Colonic mucosa (tissue), 4 donors: ENCODE measurements at regions of chr15 and their contacts with region 1.

Region 1: GRCh38 chr15:40421246-40422157 is 15.9 kb downstream of the IVD start:
- DNase-seq: peak; percentile 89
- H3K4me3 ChIP-seq: no peak overlapping the region
- H3K27ac ChIP-seq: peak overlapping the region; percentile 50
- H3K4me1 ChIP-seq: peaks cover 4% of the 10 kb centered on the region
- H3K27me3 ChIP-seq: no peaks in the 10 kb centered on the region
- CTCF ChIP-seq: peak; percentile 88

Region 2: GRCh38 chr15:40323239-40323952 is 98.1 kb before region 1 on chr15 and contains the start of gene INAFM2:
- intact Hi-C with region 1: loop called (anchors 5 kb)
- DNase-seq: peak; percentile 87
- H3K4me3 ChIP-seq: peak within 1 kb of the TSS; percentile 81
- H3K27ac ChIP-seq: peak within 1 kb of the TSS; percentile 63
- H3K4me1 ChIP-seq: peaks cover 5% of the 10 kb centered on the region
- H3K27me3 ChIP-seq: no peaks in the 10 kb centered on the region
- CTCF ChIP-seq: peak; percentile 55
- total RNA-seq, gene INAFM2: 10.8 to 28.6 TPM

Region 3: DNA sequence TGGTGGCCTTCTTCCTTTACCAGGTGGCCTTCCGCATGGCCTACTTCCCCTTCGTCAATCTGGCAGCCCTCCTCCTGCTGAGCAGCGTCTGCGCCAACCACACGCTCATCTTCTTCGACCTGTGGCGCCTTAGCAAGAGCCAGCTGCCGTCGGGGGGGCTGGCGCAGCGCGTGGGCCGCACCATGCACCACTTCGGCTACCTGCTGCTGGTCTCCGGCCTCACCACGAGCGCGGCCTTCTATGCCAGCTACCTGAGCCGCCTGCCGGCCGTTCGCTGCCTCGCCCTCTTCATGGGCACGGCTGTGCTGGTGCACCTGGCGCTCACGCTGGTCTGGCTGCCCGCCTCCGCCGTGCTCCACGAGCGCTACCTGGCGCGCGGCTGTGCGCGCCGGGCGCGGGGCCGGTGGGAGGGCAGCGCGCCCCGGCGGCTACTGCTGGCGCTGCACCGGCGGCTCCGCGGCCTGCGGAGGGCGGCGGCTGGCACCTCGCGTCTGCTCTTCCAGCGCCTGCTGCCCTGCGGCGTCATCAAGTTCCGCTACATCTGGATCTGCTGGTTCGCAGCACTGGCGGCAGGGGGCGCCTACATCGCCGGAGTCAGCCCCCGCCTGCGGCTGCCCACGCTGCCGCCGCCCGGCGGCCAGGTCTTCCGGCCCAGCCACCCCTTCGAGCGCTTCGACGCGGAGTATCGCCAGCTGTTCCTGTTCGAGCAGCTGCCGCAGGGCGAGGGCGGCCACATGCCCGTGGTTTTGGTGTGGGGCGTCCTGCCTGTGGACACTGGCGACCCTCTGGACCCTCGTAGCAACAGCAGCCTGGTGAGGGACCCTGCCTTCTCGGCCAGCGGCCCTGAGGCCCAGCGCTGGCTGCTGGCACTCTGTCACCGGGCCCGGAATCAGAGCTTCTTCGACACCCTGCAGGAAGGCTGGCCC is 53.6 kb before region 1 on chr15:
- intact Hi-C with region 1: loop called (anchors 2 kb)
- DNase-seq: peak; percentile 85
- H3K4me3 ChIP-seq: peak overlapping the region; percentile 32
- H3K27ac ChIP-seq: peak overlapping the region; percentile 44
- H3K4me1 ChIP-seq: peaks cover 9% of the 10 kb centered on the region
- H3K27me3 ChIP-seq: no peaks in the 10 kb centered on the region
- CTCF ChIP-seq: peak; percentile 79

Region 4: GRCh38 chr15:40382580-40383456 is 38.7 kb before region 1 on chr15 and contains the start of gene KNSTRN:
- intact Hi-C with region 1: no loop called
- DNase-seq: peak; percentile 95
- H3K4me3 ChIP-seq: peak within 1 kb of the TSS; percentile 94
- H3K27ac ChIP-seq: no peak within 1 kb of the TSS
- H3K4me1 ChIP-seq: peaks cover 8% of the 10 kb centered on the region
- H3K27me3 ChIP-seq: no peaks in the 10 kb centered on the region
- CTCF ChIP-seq: no peak
- total RNA-seq, gene KNSTRN: 12.2 to 51.2 TPM

Region 5: GRCh38 chr15:41331833-41332787 is 910.6 kb after region 1 on chr15 and contains the start of gene OIP5:
- intact Hi-C with region 1: no loop called
- DNase-seq: peak; percentile 99
- H3K4me3 ChIP-seq: peak within 1 kb of the TSS; percentile 86
- H3K27ac ChIP-seq: peak within 1 kb of the TSS; percentile 47
- H3K4me1 ChIP-seq: no peaks in the 10 kb centered on the region
- H3K27me3 ChIP-seq: no peaks in the 10 kb centered on the region
- CTCF ChIP-seq: peak; percentile 75
- total RNA-seq, gene OIP5: 5.7 to 23.0 TPM